Activated CD8-positive, alpha-beta memory T cell treated with anti-CD3 and anti-CD28 coated beads, Interleukin-2, amount 10 ng/mL, durations not matched to agents 7 days and 5 days (primary cell): ENCODE measurements at regions of chr19 and their contacts with region 1.

Region 1: DNA sequence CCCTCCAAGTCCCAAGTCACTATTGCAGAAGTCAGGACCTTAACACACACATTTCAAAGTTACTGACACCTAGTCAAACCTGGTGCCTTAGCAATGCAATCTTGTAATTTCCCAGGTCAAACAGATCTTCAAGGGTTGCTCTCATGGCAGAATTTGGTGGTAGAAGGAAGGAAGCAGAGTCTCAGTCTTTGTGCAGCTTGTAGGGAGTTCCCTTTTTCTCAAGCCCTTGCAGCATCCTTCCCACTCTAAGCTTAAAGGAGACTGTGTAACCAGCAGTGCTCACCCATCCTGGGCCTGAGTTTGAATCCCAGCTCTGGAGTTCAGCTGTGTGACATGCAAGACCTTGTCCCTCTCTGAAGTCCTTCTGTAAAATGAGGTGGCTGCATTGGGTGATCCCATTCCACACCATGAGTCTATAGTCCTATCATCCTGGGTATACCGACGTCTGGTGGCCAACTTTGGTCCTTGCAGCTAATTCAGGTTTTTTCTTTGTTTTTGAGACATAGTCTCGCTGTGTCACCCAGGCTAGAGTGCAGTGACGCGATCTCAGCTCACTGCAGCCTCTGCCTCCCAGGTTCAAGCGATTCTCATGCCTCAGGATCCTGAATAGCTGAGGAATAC is 9.8 kb downstream of the SIGLEC10 start:
- DNase-seq: peak; percentile 62
- ATAC-seq: peak; percentile 60
- H3K4me3 Mint-ChIP-seq: no peak overlapping the region
- H3K27ac Mint-ChIP-seq: no peak overlapping the region
- H3K4me1 Mint-ChIP-seq: peaks cover 10% of the 10 kb centered on the region
- H3K27me3 Mint-ChIP-seq: no peaks in the 10 kb centered on the region

Region 2: DNA sequence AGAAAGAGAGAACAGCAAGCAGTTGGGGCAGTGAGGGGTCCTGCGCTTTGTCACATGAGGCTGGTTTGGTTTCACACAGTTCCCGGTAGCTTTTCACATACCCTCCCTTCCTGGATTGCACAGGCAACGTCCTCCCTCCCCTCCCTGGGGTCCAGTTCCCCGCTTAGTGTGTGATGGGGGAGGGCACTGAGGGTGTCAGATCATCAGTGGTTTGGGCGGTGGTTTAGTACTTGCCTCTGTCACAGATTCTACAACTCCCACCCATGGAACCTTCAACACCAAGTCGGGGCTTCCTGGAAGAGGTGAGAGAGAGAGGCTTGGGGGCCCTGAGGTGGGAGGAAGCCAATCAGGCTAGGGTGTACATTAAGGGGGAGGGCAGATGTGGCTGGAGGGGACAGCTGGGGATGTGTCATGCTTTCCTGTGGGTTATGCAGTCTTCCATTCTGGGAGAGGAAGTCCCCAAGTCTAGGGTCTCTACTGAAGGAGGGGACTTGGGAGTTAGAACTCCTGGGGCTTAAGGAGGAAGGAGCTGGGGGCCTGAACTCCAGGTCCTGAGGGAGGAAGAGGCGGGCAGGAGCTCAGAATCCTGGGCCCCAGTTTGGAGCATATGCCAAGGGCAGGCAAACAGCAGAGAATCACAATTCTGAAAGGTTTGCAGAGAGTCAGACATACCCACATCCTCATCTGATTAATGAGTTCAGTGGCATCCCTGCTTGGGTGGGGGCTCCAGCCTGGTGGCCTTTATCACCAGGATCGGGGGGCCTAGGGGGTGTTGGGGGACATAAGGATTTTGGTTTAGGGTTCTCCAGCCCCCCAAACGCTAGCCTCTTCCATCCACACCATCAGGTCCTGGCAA is 34.7 kb before region 1 on chr19 and contains the start of gene NKG7:
- CTCF ChIA-PET with region 1: interaction called, 15 read pairs
- DNase-seq: peak; percentile 98
- ATAC-seq: peak; percentile 71
- H3K4me3 Mint-ChIP-seq: peak within 1 kb of the TSS; percentile 97
- H3K27ac Mint-ChIP-seq: peak within 1 kb of the TSS; percentile 98
- H3K4me1 Mint-ChIP-seq: peaks cover 54% of the 10 kb centered on the region
- H3K27me3 Mint-ChIP-seq: no peaks in the 10 kb centered on the region
- total RNA-seq, gene NKG7: 852 to 1,014 TPM